PC-9 (cell line): ENCODE measurements at regions of chr9 and their contacts with region 1.

Region 1: GRCh38 chr9:2709645-2710101 is 7.6 kb upstream of the KCNV2 start:
- DNase-seq: no peak
- H3K4me3 ChIP-seq: no peak overlapping the region
- H3K27ac ChIP-seq: no peak overlapping the region
- H3K4me1 ChIP-seq: no peaks in the 10 kb centered on the region
- H3K27me3 ChIP-seq: no peaks in the 10 kb centered on the region
- CTCF ChIP-seq: no peak

Region 2: GRCh38 chr9:3181049-3181953 is 471.6 kb after region 1 on chr9:
- CTCF ChIA-PET with region 1: interaction called, 16 read pairs
- POLR2A ChIA-PET with region 1: no interaction called
- intact Hi-C with region 1: no loop called
- DNase-seq: no peak
- H3K4me3 ChIP-seq: no peak overlapping the region
- H3K27ac ChIP-seq: no peak overlapping the region
- H3K4me1 ChIP-seq: no peaks in the 10 kb centered on the region
- H3K27me3 ChIP-seq: peaks cover 12% of the 10 kb centered on the region; the same call in 1 of the 2 replicates
- CTCF ChIP-seq: no peak

Region 3: GRCh38 chr9:4421847-4422246 is 1712.2 kb after region 1 on chr9:
- CTCF ChIA-PET with region 1: no interaction called
- POLR2A ChIA-PET with region 1: interaction called, 14 read pairs
- intact Hi-C with region 1: no loop called
- DNase-seq: peak in 1 of 2 experiments; percentile 54
- H3K4me3 ChIP-seq: no peak overlapping the region
- H3K27ac ChIP-seq: no peak overlapping the region
- H3K4me1 ChIP-seq: peaks cover 60% of the 10 kb centered on the region
- H3K27me3 ChIP-seq: no peaks in the 10 kb centered on the region
- CTCF ChIP-seq: no peak